Astrocyte of the spinal cord (primary cell): ENCODE measurements at regions of chr6 and their contacts with region 1.

Region 1: GRCh38 chr6:132483779-132484679 is 28.9 kb downstream of the STX7 start:
- DNase-seq: peak; percentile 71
- H3K4me3 ChIP-seq: no peak overlapping the region
- CTCF ChIP-seq: peak; percentile 57

Region 2: DNA sequence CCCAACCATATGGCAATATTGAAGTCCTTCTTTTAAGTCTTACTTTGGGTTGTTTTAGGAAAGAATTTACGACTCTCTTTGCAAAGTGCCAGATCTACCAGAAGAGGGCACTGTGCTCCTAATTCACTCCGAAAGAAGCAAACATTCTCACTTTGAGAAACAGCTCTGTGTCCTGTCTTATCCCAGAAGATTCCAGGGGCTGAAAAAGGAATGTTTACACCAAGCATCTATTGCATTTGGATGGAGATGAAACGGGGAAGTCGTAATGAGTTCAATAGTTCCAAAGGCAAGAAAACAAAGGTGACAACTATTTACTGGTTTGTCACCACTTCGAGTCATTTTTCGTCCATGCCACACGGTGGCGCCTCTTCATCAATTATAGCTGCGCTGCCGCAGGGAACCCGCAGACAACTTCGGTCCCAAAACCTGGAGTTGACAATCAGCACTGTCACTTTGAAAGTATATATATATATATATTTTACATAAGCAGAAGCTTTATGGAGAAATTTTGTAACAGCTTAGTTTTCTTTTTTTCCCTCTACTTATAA is 204.4 kb before region 1 on chr6:
- in situ Hi-C with region 1: loop called (anchors 25 kb)
- DNase-seq: peak; percentile 85
- H3K4me3 ChIP-seq: peak overlapping the region; percentile 42
- CTCF ChIP-seq: peak; percentile 65